Heart left ventricle (tissue), 16 donors: ENCODE measurements at regions of chr2 and their contacts with region 1.

Region 1: GRCh38 chr2:222057347-222058073 is 241.3 kb downstream of the PAX3 start:
- DNase-seq: no peak
- ATAC-seq: peak in 2 of 4 donors; percentile 62 to 69
- H3K4me3 ChIP-seq: no peak overlapping the region
- H3K27ac ChIP-seq: no peak overlapping the region
- H3K4me1 ChIP-seq: peaks cover 0 to 10% (median 0%) of the 10 kb centered on the region in 12 donors
- H3K27me3 ChIP-seq: peaks cover 0 to 61% (median 11%) of the 10 kb centered on the region in 9 donors
- CTCF ChIP-seq: peak; percentile 45 to 77 (median 60)
- POLR2A ChIP-seq: no peak

Region 2: GRCh38 chr2:221836095-221836494 is 221.4 kb before region 1 on chr2:
- intact Hi-C with region 1: no loop called
- DNase-seq: no peak
- ATAC-seq: no peak
- H3K4me3 ChIP-seq: no peak overlapping the region
- H3K27ac ChIP-seq: no peak overlapping the region
- H3K4me1 ChIP-seq: no peaks in the 10 kb centered on the region
- H3K27me3 ChIP-seq: peaks cover 0 to 4% (median 0%) of the 10 kb centered on the region in 9 donors
- CTCF ChIP-seq: no peak
- POLR2A ChIP-seq: no peak

Region 3: DNA sequence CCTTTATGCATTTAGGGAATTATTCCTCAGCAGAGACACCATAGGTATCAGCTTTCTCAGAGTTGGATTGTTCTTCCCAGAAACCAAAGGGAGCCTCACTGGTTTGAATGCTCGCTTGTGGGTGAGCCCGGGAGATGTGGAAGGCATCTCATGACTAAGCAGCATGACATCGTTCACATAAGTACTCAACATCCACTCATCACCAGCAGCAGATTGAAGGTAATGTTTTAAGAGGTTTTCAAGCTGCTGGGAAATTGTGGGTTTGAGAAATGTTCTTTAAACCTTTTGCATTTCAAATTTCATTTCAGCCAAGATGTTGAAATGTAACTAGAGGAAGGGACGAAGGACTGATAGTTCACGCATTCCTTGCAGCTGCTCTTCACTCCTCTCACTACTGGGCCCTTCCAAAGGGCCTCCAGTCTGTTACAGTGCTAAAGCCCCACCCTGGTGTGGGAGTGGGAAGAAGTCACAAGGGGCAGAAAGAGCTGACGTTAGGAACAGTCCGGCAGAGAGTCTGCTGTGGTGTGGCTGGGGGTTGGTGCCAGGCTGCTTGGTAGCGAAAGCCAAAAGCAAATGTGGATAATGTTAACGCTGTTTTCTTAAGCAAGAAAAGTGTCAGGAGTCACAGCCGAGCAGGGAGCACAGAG is 160.9 kb before region 1 on chr2:
- intact Hi-C with region 1: no loop called
- DNase-seq: peak in 2 of 5 donors; percentile 41 to 45
- ATAC-seq: peak; percentile 37 to 92 (median 76)
- H3K4me3 ChIP-seq: no peak overlapping the region
- H3K27ac ChIP-seq: peak overlapping the region in 2 of 12 donors; percentile 24 to 26
- H3K4me1 ChIP-seq: peaks cover 0 to 4% (median 0%) of the 10 kb centered on the region in 12 donors
- H3K27me3 ChIP-seq: no peaks in the 10 kb centered on the region
- CTCF ChIP-seq: no peak
- POLR2A ChIP-seq: no peak

Region 4: DNA sequence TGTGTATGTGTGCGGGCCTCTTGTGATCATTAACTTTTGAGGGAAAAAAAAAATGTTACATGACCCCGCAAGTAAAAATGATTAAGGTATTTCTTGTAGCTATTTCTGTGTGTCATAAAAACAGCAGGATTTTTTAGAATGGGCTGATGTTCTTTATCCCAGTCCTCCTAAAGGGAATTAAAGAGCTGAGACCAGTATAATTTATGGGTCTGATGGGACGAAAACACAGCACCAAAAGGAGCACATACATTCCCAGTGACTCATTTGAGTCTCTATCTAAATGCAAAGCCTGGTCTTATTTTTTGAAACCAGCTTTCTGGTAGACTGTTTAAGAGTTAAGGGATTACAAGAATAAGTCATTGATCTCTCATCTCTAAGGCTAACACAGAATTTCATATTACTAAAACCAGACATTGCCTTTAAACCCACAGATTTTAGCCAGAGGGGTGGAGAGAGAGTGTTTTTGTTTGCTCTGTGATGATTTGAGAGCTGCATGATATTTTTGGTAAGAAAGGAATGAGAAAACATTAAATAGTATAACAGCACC is 143.1 kb before region 1 on chr2:
- intact Hi-C with region 1: no loop called
- DNase-seq: no peak
- ATAC-seq: no peak
- H3K4me3 ChIP-seq: no peak overlapping the region
- H3K27ac ChIP-seq: no peak overlapping the region
- H3K4me1 ChIP-seq: no peaks in the 10 kb centered on the region
- H3K27me3 ChIP-seq: no peaks in the 10 kb centered on the region
- CTCF ChIP-seq: no peak
- POLR2A ChIP-seq: no peak

Region 5: GRCh38 chr2:222305516-222306392 is 248.2 kb after region 1 on chr2:
- intact Hi-C with region 1: loop called in 7 of 10 experiments (anchors 10 kb)
- DNase-seq: peak in 2 of 5 donors; percentile 29 to 67
- ATAC-seq: peak in 3 of 4 donors; percentile 29 to 36 (median 36)
- H3K4me3 ChIP-seq: peak overlapping the region; percentile 23 to 65 (median 52)
- H3K27ac ChIP-seq: no peak overlapping the region
- H3K4me1 ChIP-seq: peaks cover 0 to 59% (median 18%) of the 10 kb centered on the region in 12 donors
- H3K27me3 ChIP-seq: peaks cover 84 to 100% (median 100%) of the 10 kb centered on the region in 9 donors
- CTCF ChIP-seq: no peak
- POLR2A ChIP-seq: no peak

Region 6: DNA sequence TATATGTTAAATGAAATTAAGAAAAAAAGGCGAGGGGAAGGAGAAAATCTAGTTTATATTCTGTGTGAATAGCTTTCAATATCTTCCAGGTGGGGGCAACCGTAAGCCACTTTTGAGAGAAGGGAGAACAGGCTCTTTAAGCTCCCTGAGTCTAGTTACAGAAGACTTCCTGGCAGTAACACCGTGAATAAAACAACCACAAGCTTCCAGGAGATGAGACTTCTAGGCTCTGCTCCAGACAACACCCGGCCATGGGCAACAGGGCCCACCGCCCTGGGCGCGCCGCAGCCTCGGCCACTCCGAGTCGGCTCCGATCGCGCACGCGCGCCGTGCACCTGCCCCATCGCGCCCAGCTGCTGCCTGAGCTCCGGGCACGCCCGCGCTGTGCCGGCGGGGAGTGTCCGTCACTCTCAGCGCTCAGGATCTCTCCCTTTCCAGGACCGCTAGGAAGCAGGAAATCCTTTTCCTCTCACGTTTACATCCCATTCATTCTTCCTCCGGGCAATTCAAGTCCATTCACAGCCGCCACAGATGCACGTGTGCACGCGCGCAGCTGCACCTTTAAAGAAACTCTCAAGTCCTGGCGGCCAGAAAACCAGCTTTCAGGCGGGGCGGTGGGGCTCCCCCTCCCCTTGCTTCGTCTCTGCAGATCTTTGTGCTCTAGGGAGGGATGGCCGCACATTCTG is 260.7 kb after region 1 on chr2:
- intact Hi-C with region 1: loop called in 4 of 10 experiments (anchors 5 to 10 kb)
- DNase-seq: peak in 3 of 5 donors; percentile 49 to 75 (median 75)
- ATAC-seq: peak; percentile 43 to 85 (median 79)
- H3K4me3 ChIP-seq: peak overlapping the region; percentile 13 to 68 (median 50)
- H3K27ac ChIP-seq: peak overlapping the region in 2 of 12 donors; percentile 17 to 29
- H3K4me1 ChIP-seq: peaks cover 0 to 21% (median 8%) of the 10 kb centered on the region in 12 donors
- H3K27me3 ChIP-seq: peaks cover 3 to 79% (median 23%) of the 10 kb centered on the region in 9 donors
- CTCF ChIP-seq: peak in 11 of 12 donors; percentile 18 to 68 (median 54)
- POLR2A ChIP-seq: no peak

Region 7: GRCh38 chr2:222561817-222562645 is 504.5 kb after region 1 on chr2:
- intact Hi-C with region 1: loop called in 5 of 10 experiments (anchors 2 to 10 kb)
- DNase-seq: peak in 2 of 5 donors; percentile 29 to 40
- ATAC-seq: peak; percentile 38 to 83 (median 80)
- H3K4me3 ChIP-seq: no peak overlapping the region
- H3K27ac ChIP-seq: no peak overlapping the region
- H3K4me1 ChIP-seq: peaks cover 0 to 11% (median 0%) of the 10 kb centered on the region in 12 donors
- H3K27me3 ChIP-seq: peaks cover 0 to 2% (median 0%) of the 10 kb centered on the region in 9 donors
- CTCF ChIP-seq: peak; percentile 52 to 68 (median 58)
- POLR2A ChIP-seq: no peak